ENCODE measurements at regions of chr3 and their contacts with region 1.

Region 1: GRCh38 chr3:189132231-189132707 is 39.5 kb upstream of the TPRG1 start:
- DNase-seq: peak; percentile 69 to 78
- H3K4me3 ChIP-seq: no peak overlapping the region
- H3K27ac ChIP-seq: 0 out of 2 replicates have a peak overlapping the region, but pooled peaks have one; percentile 2
- H3K4me1 ChIP-seq: peaks cover 14% of the 10 kb centered on the region
- H3K27me3 ChIP-seq: no peaks in the 10 kb centered on the region
- CTCF ChIP-seq: no peak

Region 2: DNA sequence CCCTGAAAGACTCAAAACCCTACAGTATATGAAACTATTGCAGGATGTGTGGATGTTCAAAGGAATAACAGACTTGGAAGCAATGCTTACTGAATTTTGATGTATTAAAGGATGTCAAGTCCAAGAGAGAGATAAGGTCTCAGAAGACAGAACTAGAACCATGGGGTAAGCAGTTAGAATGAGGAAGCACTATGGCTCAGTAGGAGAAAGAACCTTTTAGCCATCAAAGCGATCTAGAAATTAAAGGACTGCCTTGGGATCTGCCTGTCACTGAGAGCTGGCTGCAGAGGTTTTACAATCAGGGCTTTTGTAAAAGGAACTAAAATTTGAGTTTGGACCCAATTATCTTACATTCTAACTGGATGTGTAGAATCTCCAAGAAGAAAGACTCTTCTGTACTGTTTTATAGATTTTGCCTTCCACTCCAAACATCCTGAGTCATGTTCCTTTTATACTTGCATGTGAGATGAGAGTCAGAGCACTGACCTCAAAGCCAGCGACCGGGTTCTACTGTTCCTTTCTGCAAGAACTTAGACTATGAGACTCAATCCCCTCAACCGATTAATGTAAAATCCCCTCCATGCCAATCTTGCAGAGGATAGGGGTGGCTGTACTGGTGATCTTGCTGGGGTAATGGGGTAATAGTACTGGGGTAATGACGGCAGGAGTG is 372.8 kb before region 1 on chr3:
- CTCF ChIA-PET with region 1: no interaction called
- POLR2A ChIA-PET with region 1: interaction called, 14 read pairs
- intact Hi-C with region 1: no loop called
- DNase-seq: no peak
- H3K4me3 ChIP-seq: no peak overlapping the region
- H3K27ac ChIP-seq: no peak overlapping the region
- H3K4me1 ChIP-seq: no peaks in the 10 kb centered on the region
- H3K27me3 ChIP-seq: no peaks in the 10 kb centered on the region
- CTCF ChIP-seq: no peak